ENCODE measurements at regions of chr1 and their contacts with region 1.

Region 1: GRCh38 chr1:85307987-85308832 is 31.8 kb upstream of the BCL10 start:
- DNase-seq: peak; percentile 92 to 96 (median 94)
- H3K4me3 ChIP-seq: peak overlapping the region in 1 of 3 donors; percentile 2
- H3K27ac ChIP-seq: no peak overlapping the region
- H3K4me1 ChIP-seq: peaks cover 0 to 7% (median 0%) of the 10 kb centered on the region in 3 donors
- H3K27me3 ChIP-seq: no peaks in the 10 kb centered on the region
- CTCF ChIP-seq: peak; percentile 98

Region 2: DNA sequence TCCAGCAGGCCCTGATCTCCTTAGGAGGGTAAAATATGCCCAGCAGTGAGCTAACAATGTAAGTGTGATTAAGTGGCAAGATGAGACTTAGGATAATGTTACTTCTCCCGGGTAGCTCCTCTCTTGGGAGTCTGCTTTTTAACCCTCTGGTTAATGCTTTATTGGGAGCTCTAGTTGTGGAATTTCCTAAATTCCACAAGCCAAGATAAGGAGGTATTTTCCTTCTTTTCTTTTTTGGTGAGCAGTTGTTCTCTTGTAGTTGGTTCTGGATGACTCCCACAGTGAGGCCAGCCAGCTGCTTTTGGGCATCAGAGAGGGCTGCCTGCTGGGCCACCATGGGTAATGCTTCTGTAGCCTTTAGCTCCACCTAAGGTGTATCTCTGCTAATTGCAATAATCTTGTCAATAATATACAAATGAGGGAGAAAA is 68.0 kb before region 1 on chr1:
- intact Hi-C with region 1: no loop called
- DNase-seq: peak in 2 of 5 donors; percentile 30 to 37
- H3K4me3 ChIP-seq: no peak overlapping the region
- H3K27ac ChIP-seq: no peak overlapping the region
- H3K4me1 ChIP-seq: no peaks in the 10 kb centered on the region
- H3K27me3 ChIP-seq: no peaks in the 10 kb centered on the region
- CTCF ChIP-seq: peak; percentile 20

Region 3: GRCh38 chr1:85502625-85503083 is 194.4 kb after region 1 on chr1:
- intact Hi-C with region 1: loop called (anchors 10 kb)
- DNase-seq: peak in 3 of 5 donors; percentile 45 to 79 (median 60)
- H3K4me3 ChIP-seq: no peak overlapping the region
- H3K27ac ChIP-seq: no peak overlapping the region
- H3K4me1 ChIP-seq: peaks cover 0 to 4% (median 0%) of the 10 kb centered on the region in 3 donors
- H3K27me3 ChIP-seq: no peaks in the 10 kb centered on the region
- CTCF ChIP-seq: peak; percentile 71

Region 4: DNA sequence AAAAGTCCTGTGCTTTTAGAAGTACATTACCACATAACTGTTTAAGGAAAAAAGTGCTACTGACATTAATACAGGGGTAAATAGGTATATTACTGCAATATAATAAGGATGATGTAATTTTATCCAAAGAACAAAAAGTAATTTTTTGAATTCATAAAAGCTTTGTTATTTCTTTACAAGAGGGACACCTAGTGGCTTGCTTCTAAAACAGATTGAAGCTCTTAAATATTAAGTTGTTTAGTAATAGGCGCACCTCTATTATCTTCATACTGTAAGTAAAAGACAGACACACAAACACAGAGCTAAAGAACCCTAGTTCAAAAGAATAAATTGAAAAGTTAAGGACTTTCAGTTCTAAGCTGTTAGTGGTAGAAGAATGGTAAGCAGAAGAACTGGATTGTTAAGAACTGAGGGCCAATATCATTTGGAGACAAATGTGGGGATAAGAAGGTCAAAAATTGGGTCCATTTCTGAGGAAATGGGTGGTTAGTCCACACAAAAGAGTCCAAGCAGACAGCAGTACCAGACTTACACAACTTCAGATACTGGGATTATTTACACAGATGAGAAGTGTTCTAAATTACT is 384.6 kb after region 1 on chr1:
- intact Hi-C with region 1: loop called (anchors 5 kb)
- DNase-seq: peak in 2 of 5 donors; percentile 26 to 70
- H3K4me3 ChIP-seq: no peak overlapping the region
- H3K27ac ChIP-seq: no peak overlapping the region
- H3K4me1 ChIP-seq: no peaks in the 10 kb centered on the region
- H3K27me3 ChIP-seq: no peaks in the 10 kb centered on the region
- CTCF ChIP-seq: peak; percentile 42